A673 (cell line): ENCODE measurements at regions of chr7 and their contacts with region 1.

Region 1: GRCh38 chr7:151759591-151760042 is 117.3 kb downstream of the PRKAG2 start:
- DNase-seq: peak; percentile 70
- H3K4me3 ChIP-seq: no peak overlapping the region
- H3K27ac ChIP-seq: no peak overlapping the region
- H3K4me1 ChIP-seq: peaks cover 6% of the 10 kb centered on the region
- H3K27me3 ChIP-seq: no peaks in the 10 kb centered on the region
- CTCF ChIP-seq: peak; percentile 93

Region 2: DNA sequence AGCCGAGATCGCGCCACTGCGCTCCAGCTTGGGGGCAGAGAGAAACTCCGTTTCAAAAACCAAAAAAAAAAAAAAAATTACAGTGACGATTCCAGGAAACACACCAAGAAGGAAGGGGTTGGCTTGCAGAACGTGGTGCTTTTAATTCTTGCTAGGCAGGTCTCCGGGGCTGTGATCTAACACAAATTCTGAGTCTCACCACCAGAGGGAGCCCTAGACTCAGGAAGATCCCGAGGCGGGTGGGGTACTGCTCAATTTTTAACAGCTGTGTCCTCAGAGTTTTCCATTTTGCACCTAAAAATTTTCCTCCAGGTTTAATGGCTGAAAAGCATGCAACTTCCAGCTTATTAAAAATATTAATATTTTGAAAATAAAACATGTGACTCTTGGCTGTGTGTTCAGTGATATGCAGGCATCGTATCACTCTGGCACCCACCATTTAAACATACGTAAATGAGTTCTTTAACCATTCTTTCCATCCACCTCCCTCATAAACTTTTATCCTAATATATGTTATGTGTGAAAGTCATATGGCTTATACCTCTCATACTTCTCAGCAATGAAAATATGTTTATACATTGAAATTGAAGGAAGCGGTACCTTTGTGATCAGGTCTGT is 444.5 kb before region 1 on chr7:
- CTCF ChIA-PET with region 1: no interaction called
- POLR2A ChIA-PET with region 1: no interaction called
- intact Hi-C with region 1: loop called (anchors 5 kb)
- DNase-seq: peak; percentile 80
- H3K4me3 ChIP-seq: no peak overlapping the region
- H3K27ac ChIP-seq: no peak overlapping the region
- H3K4me1 ChIP-seq: no peaks in the 10 kb centered on the region
- H3K27me3 ChIP-seq: no peaks in the 10 kb centered on the region
- CTCF ChIP-seq: peak; percentile 82

Region 3: DNA sequence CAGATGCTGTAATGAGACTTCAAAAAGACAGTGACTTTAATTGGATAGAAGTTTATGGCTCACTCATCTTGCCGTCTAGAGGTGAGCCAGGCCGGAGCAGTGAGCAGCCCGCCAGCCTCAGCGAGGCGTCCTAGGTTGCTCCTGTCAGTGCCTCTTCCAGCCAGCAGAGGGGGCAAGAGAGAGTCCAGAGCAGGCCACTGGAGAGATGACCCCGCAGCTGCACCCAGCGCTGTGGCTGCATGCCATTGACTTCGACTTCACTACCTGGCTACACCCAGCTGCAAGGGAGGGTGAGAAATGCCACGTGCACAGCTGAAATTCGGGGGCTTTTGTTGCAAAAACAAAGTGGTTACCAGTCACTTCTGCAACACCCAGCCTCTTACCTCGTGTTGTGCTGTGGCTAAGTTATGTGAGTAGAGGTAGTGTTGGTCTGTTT is 391.5 kb before region 1 on chr7:
- CTCF ChIA-PET with region 1: no interaction called
- POLR2A ChIA-PET with region 1: no interaction called
- intact Hi-C with region 1: loop called (anchors 1 kb)
- DNase-seq: peak; percentile 70
- H3K4me3 ChIP-seq: no peak overlapping the region
- H3K27ac ChIP-seq: no peak overlapping the region
- H3K4me1 ChIP-seq: no peaks in the 10 kb centered on the region
- H3K27me3 ChIP-seq: no peaks in the 10 kb centered on the region
- CTCF ChIP-seq: peak; percentile 88

Region 4: GRCh38 chr7:151570366-151570915 is 189.2 kb before region 1 on chr7:
- CTCF ChIA-PET with region 1: interaction called, 3 read pairs
- POLR2A ChIA-PET with region 1: no interaction called
- intact Hi-C with region 1: loop called (anchors 5 kb)
- DNase-seq: no peak
- H3K4me3 ChIP-seq: no peak overlapping the region
- H3K27ac ChIP-seq: no peak overlapping the region
- H3K4me1 ChIP-seq: peaks cover 9% of the 10 kb centered on the region
- H3K27me3 ChIP-seq: no peaks in the 10 kb centered on the region
- CTCF ChIP-seq: peak; percentile 50

Region 5: DNA sequence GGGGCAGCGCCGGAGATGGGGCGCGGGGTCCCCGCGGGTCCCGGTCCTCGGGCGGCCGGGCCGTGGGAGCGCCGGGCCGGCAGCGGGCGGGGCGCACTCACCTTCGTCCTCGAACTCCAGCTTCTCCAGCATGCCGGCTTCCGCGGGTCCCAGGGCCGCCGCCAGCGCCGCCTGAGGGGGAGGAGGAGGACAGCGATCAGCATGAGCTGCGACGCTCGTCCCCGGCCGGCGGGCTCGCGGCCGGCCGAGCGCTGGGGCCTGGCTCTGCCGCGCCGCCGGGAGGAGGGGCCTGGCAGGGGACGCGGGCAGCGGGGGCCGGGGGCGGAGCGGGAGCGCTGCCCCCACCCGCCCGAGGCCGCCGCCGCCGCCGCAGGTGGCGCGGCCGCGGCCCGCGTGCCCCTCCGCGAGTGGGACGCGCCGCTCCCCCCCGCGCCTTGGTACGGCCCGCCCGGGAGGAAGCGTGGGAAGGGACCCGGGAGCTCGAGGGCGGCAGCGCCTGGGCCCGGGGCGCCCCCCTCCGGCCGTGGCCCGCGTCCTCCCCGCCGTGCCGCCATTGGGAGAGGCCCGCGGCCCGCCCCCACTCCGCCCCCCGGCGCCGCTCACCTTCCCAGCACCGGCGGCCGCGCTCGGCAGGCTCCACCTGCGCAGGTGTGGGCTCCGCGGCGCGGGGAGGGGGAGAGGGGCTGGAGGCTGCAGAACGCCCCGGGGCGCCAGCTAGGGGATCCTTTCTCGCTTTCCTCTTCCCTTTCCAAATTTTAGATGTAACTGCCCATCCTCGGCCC is 127.5 kb before region 1 on chr7:
- CTCF ChIA-PET with region 1: no interaction called
- POLR2A ChIA-PET with region 1: no interaction called
- intact Hi-C with region 1: loop called (anchors 5 kb)
- DNase-seq: peak; percentile 83
- H3K4me3 ChIP-seq: peak overlapping the region; percentile 64
- H3K27ac ChIP-seq: peak overlapping the region; percentile 24
- H3K4me1 ChIP-seq: peaks cover 6% of the 10 kb centered on the region
- H3K27me3 ChIP-seq: no peaks in the 10 kb centered on the region
- CTCF ChIP-seq: no peak; the same call in 1 of the 2 replicates